PC-3 (cell line): ENCODE measurements at regions of chrX and their contacts with region 1.

Region 1: GRCh38 chrX:106894392-106894909 is 8.7 kb downstream of the RIPPLY1 start:
- DNase-seq: peak; percentile 82
- ATAC-seq: peak; percentile 65
- H3K4me3 ChIP-seq: peak overlapping the region; percentile 47; the same call in 1 of the 2 replicates
- H3K27ac ChIP-seq: peak overlapping the region; percentile 90
- H3K4me1 ChIP-seq: peaks cover 51% of the 10 kb centered on the region
- H3K27me3 ChIP-seq: no peaks in the 10 kb centered on the region
- CTCF ChIP-seq: peak; percentile 88

Region 2: DNA sequence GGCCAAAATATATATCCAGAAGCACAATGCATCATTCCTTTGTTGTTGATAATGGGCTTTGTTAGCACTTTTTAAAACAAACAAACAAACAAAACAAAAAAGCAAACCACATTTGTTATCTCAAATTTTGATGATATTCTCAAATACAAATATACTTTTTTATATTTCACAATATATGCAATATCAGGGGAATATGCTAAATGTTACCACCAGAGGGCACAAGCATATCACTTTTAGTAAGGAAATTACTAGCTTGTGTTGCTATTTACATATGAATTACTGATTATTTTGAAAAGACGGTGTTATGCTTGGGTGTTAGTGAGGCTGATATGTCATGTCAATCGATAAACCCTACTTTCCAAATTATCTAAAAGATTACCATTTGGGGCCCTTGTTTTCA is 20.4 kb before region 1 on chrX:
- CTCF ChIA-PET with region 1: interaction called, 3 read pairs
- POLR2A ChIA-PET with region 1: no interaction called
- intact Hi-C with region 1: loop called (anchors 2 kb)
- DNase-seq: peak; percentile 70
- ATAC-seq: 0 out of 2 replicates have a peak, but pooled peaks have one; percentile 27
- H3K4me3 ChIP-seq: no peak overlapping the region
- H3K27ac ChIP-seq: no peak overlapping the region
- H3K4me1 ChIP-seq: no peaks in the 10 kb centered on the region
- H3K27me3 ChIP-seq: no peaks in the 10 kb centered on the region
- CTCF ChIP-seq: peak; percentile 78

Region 3: GRCh38 chrX:106906361-106906760 is 11.9 kb after region 1 on chrX:
- CTCF ChIA-PET with region 1: no interaction called
- POLR2A ChIA-PET with region 1: no interaction called
- intact Hi-C with region 1: no loop called
- DNase-seq: no peak
- ATAC-seq: no peak
- H3K4me3 ChIP-seq: no peak overlapping the region
- H3K27ac ChIP-seq: no peak overlapping the region
- H3K4me1 ChIP-seq: no peaks in the 10 kb centered on the region
- H3K27me3 ChIP-seq: no peaks in the 10 kb centered on the region
- CTCF ChIP-seq: no peak

Region 4: DNA sequence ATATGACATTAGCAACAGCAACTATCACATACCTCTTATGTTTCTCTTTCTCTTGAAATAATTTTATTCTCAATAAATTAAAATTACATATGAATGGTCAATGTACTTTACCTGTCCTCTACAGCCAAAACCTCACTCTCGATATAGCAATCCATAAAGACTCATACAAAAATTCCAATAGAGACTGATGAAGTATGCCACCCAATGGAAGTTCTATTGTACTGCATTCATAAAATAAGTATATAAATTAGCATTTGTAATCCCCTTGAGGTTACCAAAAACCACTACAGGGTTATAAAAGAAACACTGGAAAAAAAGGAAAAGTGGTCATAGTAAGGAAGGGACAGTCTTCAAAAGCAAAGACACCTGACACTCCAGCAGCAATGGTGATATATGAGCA is 58.5 kb after region 1 on chrX:
- CTCF ChIA-PET with region 1: interaction called, 12 read pairs
- POLR2A ChIA-PET with region 1: interaction called, 4 read pairs
- intact Hi-C with region 1: loop called (anchors 1 kb)
- DNase-seq: peak; percentile 49
- ATAC-seq: no peak
- H3K4me3 ChIP-seq: no peak overlapping the region
- H3K27ac ChIP-seq: no peak overlapping the region
- H3K4me1 ChIP-seq: peaks cover 59% of the 10 kb centered on the region
- H3K27me3 ChIP-seq: no peaks in the 10 kb centered on the region
- CTCF ChIP-seq: peak; percentile 70

Region 5: GRCh38 chrX:106959901-106960300 is 65.5 kb after region 1 on chrX:
- CTCF ChIA-PET with region 1: interaction called, 51 read pairs
- POLR2A ChIA-PET with region 1: no interaction called
- intact Hi-C with region 1: loop called (anchors 1 kb)
- DNase-seq: peak; percentile 64
- ATAC-seq: peak; percentile 82
- H3K4me3 ChIP-seq: no peak overlapping the region
- H3K27ac ChIP-seq: no peak overlapping the region
- H3K4me1 ChIP-seq: peaks cover 16% of the 10 kb centered on the region
- H3K27me3 ChIP-seq: no peaks in the 10 kb centered on the region
- CTCF ChIP-seq: peak; percentile 64

Region 6: GRCh38 chrX:107000013-107000515 is 105.6 kb after region 1 on chrX and contains the start of gene MORC4:
- CTCF ChIA-PET with region 1: no interaction called
- POLR2A ChIA-PET with region 1: no interaction called
- intact Hi-C with region 1: loop called (anchors 1 kb)
- DNase-seq: peak; percentile 82
- ATAC-seq: peak; percentile 86
- H3K4me3 ChIP-seq: peak within 1 kb of the TSS; percentile 86
- H3K27ac ChIP-seq: no peak within 1 kb of the TSS
- H3K4me1 ChIP-seq: peaks cover 12% of the 10 kb centered on the region
- H3K27me3 ChIP-seq: no peaks in the 10 kb centered on the region
- CTCF ChIP-seq: no peak
- total RNA-seq, gene MORC4: 24.8 and 25.7 TPM in 2 replicates

Region 7: GRCh38 chrX:107894038-107894437 is 999.6 kb after region 1 on chrX:
- CTCF ChIA-PET with region 1: no interaction called
- POLR2A ChIA-PET with region 1: no interaction called
- intact Hi-C with region 1: loop called (anchors 10 kb)
- DNase-seq: peak; percentile 77
- ATAC-seq: peak; percentile 77
- H3K4me3 ChIP-seq: no peak overlapping the region
- H3K27ac ChIP-seq: no peak overlapping the region
- H3K4me1 ChIP-seq: no peaks in the 10 kb centered on the region
- H3K27me3 ChIP-seq: no peaks in the 10 kb centered on the region
- CTCF ChIP-seq: peak; percentile 76